ENCODE measurements at regions of chr14 and their contacts with region 1.

Region 1: DNA sequence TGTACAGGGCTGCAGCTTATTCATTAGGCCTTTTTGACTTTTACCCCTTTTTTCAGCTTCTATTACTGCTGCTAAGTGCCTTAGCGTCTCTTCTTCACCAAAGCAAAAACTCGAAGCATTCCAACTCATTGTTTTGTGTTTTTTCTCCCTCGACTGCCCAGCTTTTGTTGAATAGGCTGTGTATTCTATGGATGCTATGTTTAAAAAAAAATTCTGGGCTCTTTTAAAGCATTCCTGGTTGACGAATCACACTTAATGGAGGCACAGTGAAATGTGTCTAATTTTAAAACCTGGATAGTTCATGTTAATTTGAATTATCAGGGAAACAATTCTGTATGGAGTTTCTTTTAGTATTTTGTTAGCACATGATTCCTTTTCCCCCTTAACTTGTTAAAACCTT is 29.7 kb downstream of the KTN1 start:
- DNase-seq: no peak
- H3K4me3 ChIP-seq: no peak overlapping the region
- H3K27ac ChIP-seq: no peak overlapping the region
- H3K4me1 ChIP-seq: no peaks in the 10 kb centered on the region
- H3K27me3 ChIP-seq: no peaks in the 10 kb centered on the region
- CTCF ChIP-seq: no peak
- POLR2A ChIP-seq: no peak

Region 2: GRCh38 chr14:55579724-55580469 is 29.8 kb before region 1 on chr14 and contains the start of gene KTN1:
- intact Hi-C with region 1: loop called (anchors 1 kb)
- DNase-seq: peak; percentile 70 to 77
- H3K4me3 ChIP-seq: peak within 1 kb of the TSS; percentile 96 to 99 (median 98)
- H3K27ac ChIP-seq: peak within 1 kb of the TSS; percentile 97 to 99
- H3K4me1 ChIP-seq: peaks cover 0 to 13% of the 10 kb centered on the region in 2 donors
- H3K27me3 ChIP-seq: no peaks in the 10 kb centered on the region
- CTCF ChIP-seq: no peak
- POLR2A ChIP-seq: no peak
- total RNA-seq, gene KTN1: 142 to 215 (median 182) TPM

Region 3: GRCh38 chr14:56310643-56311042 is 701.0 kb after region 1 on chr14:
- intact Hi-C with region 1: loop called (anchors 10 kb)
- DNase-seq: no peak
- H3K4me3 ChIP-seq: no peak overlapping the region
- H3K27ac ChIP-seq: no peak overlapping the region
- H3K4me1 ChIP-seq: no peaks in the 10 kb centered on the region
- H3K27me3 ChIP-seq: no peaks in the 10 kb centered on the region
- CTCF ChIP-seq: no peak
- POLR2A ChIP-seq: no peak

Measured in breast epithelium (tissue), 4 donors.